Naive thymus-derived CD4-positive, alpha-beta T cell (primary cell): ENCODE measurements at regions of chr17 and their contacts with region 1.

Region 1: GRCh38 chr17:63512388-63512787 is 10.8 kb upstream of the KCNH6 start:
- DNase-seq: no peak
- ATAC-seq: no peak
- H3K4me3 ChIP-seq: no peak overlapping the region
- H3K4me3 Mint-ChIP-seq: no peak overlapping the region
- H3K27ac ChIP-seq: no peak overlapping the region
- H3K27ac Mint-ChIP-seq: no peak overlapping the region
- H3K4me1 ChIP-seq: no peaks in the 10 kb centered on the region
- H3K4me1 Mint-ChIP-seq: peaks cover 0 to 1% (median 0%) of the 10 kb centered on the region in 7 donors
- H3K27me3 ChIP-seq: no peaks in the 10 kb centered on the region
- H3K27me3 Mint-ChIP-seq: peaks cover 0 to 15% (median 3%) of the 10 kb centered on the region in 5 donors

Region 2: DNA sequence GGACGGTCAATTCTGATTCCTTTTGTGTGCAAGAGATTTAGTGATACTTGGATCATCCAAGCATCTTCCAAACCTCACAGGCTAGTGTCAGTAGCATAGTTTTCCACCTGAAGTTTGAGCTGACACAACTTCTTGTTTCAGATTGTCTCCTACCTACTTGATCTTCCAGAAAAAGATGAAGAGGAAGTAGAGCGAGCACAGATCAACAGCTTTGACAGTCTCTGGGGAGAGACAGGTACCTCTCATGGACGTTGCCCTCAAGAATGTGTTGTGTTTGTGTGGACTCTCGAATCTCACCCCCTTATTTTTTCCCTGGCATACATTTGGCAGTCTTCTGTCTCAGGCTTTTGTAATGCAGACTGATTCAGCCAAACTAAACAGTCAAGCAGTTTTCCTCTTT is 113.7 kb before region 1 on chr17:
- CTCF ChIA-PET with region 1: interaction called, 11 read pairs
- POLR2A ChIA-PET with region 1: no interaction called
- intact Hi-C with region 1: no loop called
- DNase-seq: no peak
- ATAC-seq: no peak
- H3K4me3 ChIP-seq: no peak overlapping the region
- H3K4me3 Mint-ChIP-seq: no peak overlapping the region
- H3K27ac ChIP-seq: no peak overlapping the region
- H3K27ac Mint-ChIP-seq: no peak overlapping the region
- H3K4me1 ChIP-seq: no peaks in the 10 kb centered on the region
- H3K4me1 Mint-ChIP-seq: no peaks in the 10 kb centered on the region
- H3K27me3 ChIP-seq: no peaks in the 10 kb centered on the region
- H3K27me3 Mint-ChIP-seq: peaks cover 0 to 12% (median 0%) of the 10 kb centered on the region in 5 donors